H1 (cell line): ENCODE measurements at regions of chr16 and their contacts with region 1.

Region 1: DNA sequence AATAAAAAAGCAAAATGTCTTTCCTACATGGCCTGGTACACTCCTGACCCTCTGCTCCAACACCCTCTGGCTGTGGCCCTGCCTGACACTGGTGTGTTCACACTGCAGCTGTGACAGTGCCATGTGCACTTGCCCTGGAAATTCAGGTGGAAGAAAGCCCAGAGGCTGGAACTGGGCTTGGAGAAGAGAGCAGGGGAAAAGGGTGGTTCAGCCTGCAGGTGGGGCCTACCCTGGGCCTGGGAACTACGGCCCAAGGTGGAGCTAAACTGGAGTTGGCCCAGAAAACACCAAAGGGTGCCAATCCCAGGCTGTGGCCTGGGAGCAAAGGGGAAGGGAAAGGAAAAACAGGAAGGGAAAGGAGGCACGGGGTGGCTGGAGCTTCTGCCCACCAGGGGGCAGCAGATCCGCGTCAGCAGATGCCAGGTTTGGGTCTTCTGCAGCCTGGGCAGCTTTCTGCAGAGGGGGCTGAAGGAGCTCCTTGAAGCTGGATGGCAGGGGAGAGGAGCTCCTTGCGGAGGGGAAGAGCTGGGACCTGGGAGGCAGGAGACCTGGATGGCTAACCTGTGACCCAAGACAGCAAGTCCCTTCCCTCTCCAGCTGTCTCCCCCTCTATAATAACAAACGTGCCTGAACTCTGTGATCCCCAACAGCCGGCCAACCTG is 15.4 kb upstream of the CTCF start:
- DNase-seq: peak; percentile 70 to 92
- H3K4me3 ChIP-seq: no peak overlapping the region
- H3K27ac ChIP-seq: no peak overlapping the region
- H3K4me1 ChIP-seq: peaks cover 0 to 4% (median 2%) of the 10 kb centered on the region in 4 experiments; a peak in 3 of 7 replicates
- H3K27me3 ChIP-seq: no peaks in the 10 kb centered on the region; a peak in 3 of 7 replicates
- CTCF ChIP-seq: peak; percentile 95 to 97 (median 97)
- EP300 ChIP-seq: no peak
- POLR2A ChIP-seq: no peak
- RAD21 ChIP-seq: peak; percentile 92 to 94

Region 2: DNA sequence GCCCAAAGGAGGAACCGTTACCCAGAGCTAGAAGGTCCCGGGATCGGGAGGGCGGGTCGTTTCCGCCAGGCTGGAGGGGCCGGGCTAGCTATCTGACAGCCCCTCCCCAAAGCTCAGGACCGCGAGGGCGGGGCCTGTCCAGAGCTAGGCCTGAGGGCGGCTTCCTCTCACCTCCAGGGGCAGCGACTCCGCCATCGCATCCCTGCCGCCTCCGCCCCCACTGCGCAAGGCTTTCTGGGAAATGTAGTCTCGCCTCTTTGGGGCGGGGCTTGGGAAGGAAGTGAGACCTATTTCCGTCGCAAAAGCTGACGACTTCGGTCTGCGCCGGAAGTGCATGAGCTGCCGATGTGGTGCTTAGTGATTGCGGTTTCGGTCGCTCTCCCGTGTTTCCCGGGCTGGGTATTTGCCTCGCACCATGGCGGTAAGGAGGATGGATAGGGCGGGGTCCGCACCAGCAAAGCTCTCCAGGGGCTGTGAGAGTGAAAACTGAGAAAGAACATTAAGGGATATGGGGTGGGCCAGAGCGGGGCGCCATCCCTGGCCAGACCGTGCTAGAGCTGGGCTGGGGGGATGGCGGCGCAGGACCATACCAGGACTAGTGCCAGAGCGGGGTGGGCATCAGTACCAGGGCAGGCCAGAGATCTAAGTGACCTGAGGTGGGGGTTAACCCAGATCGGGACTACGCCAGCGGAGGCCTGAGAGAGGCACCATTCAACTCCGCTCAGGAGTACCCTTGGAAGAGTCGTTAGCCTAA is 319.9 kb before region 1 on chr16 and contains the start of gene TMEM208:
- CTCF ChIA-PET with region 1: no interaction called
- POLR2A ChIA-PET with region 1: no interaction called
- DNase-seq: peak; percentile 96 to 99
- H3K4me3 ChIP-seq: peak within 1 kb of the TSS; percentile 83 to 96 (median 94)
- H3K27ac ChIP-seq: peak within 1 kb of the TSS; percentile 74
- H3K4me1 ChIP-seq: peaks cover 0 to 6% (median 3%) of the 10 kb centered on the region in 4 experiments; a peak in 3 of 7 replicates
- H3K27me3 ChIP-seq: no peaks in the 10 kb centered on the region; a peak in 4 of 7 replicates
- CTCF ChIP-seq: peak in 2 of 3 experiments; percentile 17 to 27; a peak in 3 of 4 replicates
- EP300 ChIP-seq: no peak
- POLR2A ChIP-seq: peak; percentile 66 to 94
- RAD21 ChIP-seq: no peak
- total RNA-seq, gene TMEM208: 37.7 and 37.9 TPM in 2 replicates

Region 3: DNA sequence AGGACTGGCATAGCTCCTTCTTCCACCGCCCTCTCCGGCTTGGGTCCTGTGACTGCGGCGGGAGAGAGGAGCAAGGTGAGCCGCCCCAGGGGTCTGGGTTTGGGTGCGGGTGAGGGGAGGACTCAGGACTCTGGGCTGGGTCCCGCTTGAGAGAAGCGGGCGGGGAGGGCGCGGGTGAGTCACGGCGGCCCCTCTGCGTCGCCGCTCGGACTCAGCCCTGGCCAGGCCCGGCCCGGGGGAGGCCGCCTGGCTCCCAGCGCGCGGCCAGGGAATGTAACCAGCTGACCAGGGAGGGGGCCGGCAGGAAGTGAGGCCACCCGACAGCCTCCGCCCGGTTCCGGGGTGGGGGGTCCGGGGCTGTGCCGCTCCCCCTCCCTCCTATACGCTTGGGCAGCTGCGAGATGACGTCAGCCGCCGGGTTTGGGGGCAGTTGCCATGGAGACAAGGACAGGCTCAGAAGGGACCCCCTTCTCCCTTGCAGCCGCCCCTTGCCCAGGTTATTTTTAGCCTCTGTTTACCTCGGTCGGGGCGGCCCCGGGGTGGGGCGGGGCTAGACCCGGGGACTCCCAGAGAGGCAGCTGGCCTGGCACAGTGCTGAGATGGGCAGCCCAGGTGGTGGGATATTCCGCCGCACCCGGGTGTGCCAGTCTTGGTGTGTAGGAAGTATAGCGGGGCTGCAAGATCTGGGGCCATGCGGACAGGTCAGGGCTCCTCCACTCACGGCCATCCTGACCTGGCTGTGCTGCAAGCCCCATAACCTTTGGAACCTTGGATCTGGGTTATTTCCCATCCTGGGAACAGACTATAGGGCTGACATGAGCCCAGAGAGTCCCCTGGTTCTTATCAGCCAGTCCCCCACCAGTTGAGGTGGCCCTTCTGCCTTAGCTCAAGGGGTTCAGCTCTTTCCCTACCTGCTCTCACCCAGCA is 16.6 kb before region 1 on chr16:
- CTCF ChIA-PET with region 1: interaction called, 23 read pairs
- POLR2A ChIA-PET with region 1: interaction called, 6 read pairs
- DNase-seq: peak in 1 of 2 experiments; percentile 69
- H3K4me3 ChIP-seq: peak overlapping the region; percentile 32 to 68 (median 48)
- H3K27ac ChIP-seq: no peak overlapping the region
- H3K4me1 ChIP-seq: peaks cover 0 to 12% (median 8%) of the 10 kb centered on the region in 4 experiments; a peak in 6 of 7 replicates
- H3K27me3 ChIP-seq: peaks cover 60 to 98% (median 91%) of the 10 kb centered on the region in 4 experiments
- CTCF ChIP-seq: no peak
- EP300 ChIP-seq: no peak
- POLR2A ChIP-seq: no peak
- RAD21 ChIP-seq: no peak

Region 4: GRCh38 chr16:67632415-67633172 is 85.7 kb after region 1 on chr16:
- CTCF ChIA-PET with region 1: interaction called, 15 read pairs
- POLR2A ChIA-PET with region 1: no interaction called
- DNase-seq: no peak
- H3K4me3 ChIP-seq: no peak overlapping the region
- H3K27ac ChIP-seq: no peak overlapping the region
- H3K4me1 ChIP-seq: no peaks in the 10 kb centered on the region
- H3K27me3 ChIP-seq: no peaks in the 10 kb centered on the region
- CTCF ChIP-seq: no peak
- EP300 ChIP-seq: no peak
- POLR2A ChIP-seq: no peak
- RAD21 ChIP-seq: no peak

Region 5: DNA sequence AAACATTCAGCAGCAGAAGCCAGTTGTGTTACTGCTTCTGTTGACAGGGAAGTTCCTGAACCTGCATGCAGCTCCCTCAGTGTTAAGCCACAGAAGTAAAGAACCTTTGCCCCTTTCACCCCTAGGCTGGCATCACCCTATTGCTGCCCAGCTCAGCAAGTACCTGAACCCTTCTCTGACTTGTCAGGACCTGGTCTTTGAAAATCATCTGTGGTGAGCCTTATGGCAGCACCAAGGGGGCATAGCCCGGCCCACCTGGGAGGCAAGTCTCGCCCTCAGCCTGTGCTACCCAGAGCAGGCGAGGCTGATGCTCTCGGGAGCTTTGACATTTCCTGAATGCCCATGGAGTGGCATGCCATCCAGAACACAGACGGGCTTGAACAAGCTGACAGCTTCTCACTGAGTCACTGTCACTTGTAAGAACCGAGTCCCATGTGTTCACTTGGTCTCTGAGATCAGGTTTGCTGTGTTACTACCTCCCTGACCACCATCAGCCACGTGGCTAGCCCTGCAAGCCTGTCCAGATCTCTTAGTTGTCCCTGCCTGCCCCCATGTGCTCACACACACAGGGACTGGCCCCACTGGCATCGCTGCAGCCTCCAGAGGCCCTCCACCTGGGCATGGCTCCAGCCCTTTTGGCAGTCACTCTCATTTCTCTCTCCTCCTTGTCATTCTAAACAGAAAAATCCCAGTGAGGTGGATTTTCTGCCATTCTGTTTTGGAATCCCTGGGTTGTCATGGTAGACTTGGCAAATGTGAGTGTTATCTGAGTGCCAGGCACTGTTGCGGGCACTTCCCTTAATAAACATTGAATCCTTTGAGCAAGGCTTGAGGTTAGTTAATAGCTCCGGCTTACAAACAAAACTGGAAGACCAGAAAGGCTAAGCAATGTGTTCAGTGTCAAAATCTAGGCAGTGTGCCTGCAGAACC is 95.2 kb after region 1 on chr16:
- CTCF ChIA-PET with region 1: interaction called, 165 read pairs
- POLR2A ChIA-PET with region 1: interaction called, 18 read pairs
- DNase-seq: no peak
- H3K4me3 ChIP-seq: no peak overlapping the region
- H3K27ac ChIP-seq: no peak overlapping the region
- H3K4me1 ChIP-seq: peaks cover 0 to 9% (median 2%) of the 10 kb centered on the region in 4 experiments; a peak in 5 of 7 replicates
- H3K27me3 ChIP-seq: peaks cover 0 to 11% (median 6%) of the 10 kb centered on the region in 4 experiments; a peak in 4 of 7 replicates
- CTCF ChIP-seq: no peak
- EP300 ChIP-seq: no peak
- POLR2A ChIP-seq: no peak
- RAD21 ChIP-seq: no peak

Region 6: GRCh38 chr16:67653128-67653786 is 106.4 kb after region 1 on chr16:
- CTCF ChIA-PET with region 1: interaction called, 165 read pairs
- POLR2A ChIA-PET with region 1: interaction called, 3 read pairs
- DNase-seq: no peak
- H3K4me3 ChIP-seq: peak overlapping the region; percentile 47 to 76 (median 58)
- H3K27ac ChIP-seq: no peak overlapping the region
- H3K4me1 ChIP-seq: peaks cover 0 to 18% (median 5%) of the 10 kb centered on the region in 4 experiments; a peak in 5 of 7 replicates
- H3K27me3 ChIP-seq: peaks cover 0 to 23% (median 17%) of the 10 kb centered on the region in 4 experiments; a peak in 4 of 7 replicates
- CTCF ChIP-seq: peak; percentile 14 to 40 (median 24); a peak in 3 of 4 replicates
- EP300 ChIP-seq: no peak
- POLR2A ChIP-seq: no peak
- RAD21 ChIP-seq: no peak

Region 7: GRCh38 chr16:67660564-67661028 is 113.7 kb after region 1 on chr16 and contains the start of gene PARD6A:
- CTCF ChIA-PET with region 1: interaction called, 61 read pairs
- POLR2A ChIA-PET with region 1: interaction called, 4 read pairs
- DNase-seq: peak; percentile 93 to 94
- H3K4me3 ChIP-seq: peak within 1 kb of the TSS; percentile 86 to 98 (median 89)
- H3K27ac ChIP-seq: peak within 1 kb of the TSS; percentile 81
- H3K4me1 ChIP-seq: peaks cover 0 to 18% (median 10%) of the 10 kb centered on the region in 4 experiments; a peak in 5 of 7 replicates
- H3K27me3 ChIP-seq: peaks cover 0 to 2% (median 0%) of the 10 kb centered on the region in 4 experiments; a peak in 1 of 7 replicates
- CTCF ChIP-seq: 0 out of 4 replicates have a peak, but pooled peaks of 1 of the 3 experiments have one; percentile 5
- EP300 ChIP-seq: no peak
- POLR2A ChIP-seq: peak in 1 of 2 experiments; percentile 16; a peak in 1 of 3 replicates
- RAD21 ChIP-seq: no peak
- total RNA-seq, gene PARD6A: 14.4 and 15.1 TPM in 2 replicates

Region 8: GRCh38 chr16:67667817-67668494 is 121.1 kb after region 1 on chr16:
- CTCF ChIA-PET with region 1: interaction called, 61 read pairs
- POLR2A ChIA-PET with region 1: no interaction called
- DNase-seq: peak; percentile 81 to 82
- H3K4me3 ChIP-seq: no peak overlapping the region; a peak in 1 of 8 replicates
- H3K27ac ChIP-seq: no peak overlapping the region
- H3K4me1 ChIP-seq: peaks cover 0 to 25% (median 15%) of the 10 kb centered on the region in 4 experiments; a peak in 5 of 7 replicates
- H3K27me3 ChIP-seq: peaks cover 0 to 3% (median 0%) of the 10 kb centered on the region in 4 experiments; a peak in 2 of 7 replicates
- CTCF ChIP-seq: peak in 2 of 3 experiments; percentile 87 to 96; a peak in 3 of 4 replicates
- EP300 ChIP-seq: no peak
- POLR2A ChIP-seq: no peak
- RAD21 ChIP-seq: peak; percentile 50 to 68